A673 (cell line): ENCODE measurements at regions of chr6 and their contacts with region 1.

Region 1: GRCh38 chr6:88982720-88983119 is 19.3 kb upstream of the RNGTT start:
- DNase-seq: peak; percentile 70
- H3K4me3 ChIP-seq: no peak overlapping the region
- H3K27ac ChIP-seq: no peak overlapping the region
- H3K4me1 ChIP-seq: peaks cover 3% of the 10 kb centered on the region
- H3K27me3 ChIP-seq: no peaks in the 10 kb centered on the region
- CTCF ChIP-seq: peak; percentile 77

Region 2: GRCh38 chr6:88899569-88900316 is 83.0 kb before region 1 on chr6:
- CTCF ChIA-PET with region 1: no interaction called
- POLR2A ChIA-PET with region 1: no interaction called
- intact Hi-C with region 1: no loop called
- DNase-seq: peak; percentile 20
- H3K4me3 ChIP-seq: no peak overlapping the region
- H3K27ac ChIP-seq: no peak overlapping the region
- H3K4me1 ChIP-seq: no peaks in the 10 kb centered on the region
- H3K27me3 ChIP-seq: no peaks in the 10 kb centered on the region
- CTCF ChIP-seq: peak; percentile 48; the same call in 1 of the 2 replicates

Region 3: DNA sequence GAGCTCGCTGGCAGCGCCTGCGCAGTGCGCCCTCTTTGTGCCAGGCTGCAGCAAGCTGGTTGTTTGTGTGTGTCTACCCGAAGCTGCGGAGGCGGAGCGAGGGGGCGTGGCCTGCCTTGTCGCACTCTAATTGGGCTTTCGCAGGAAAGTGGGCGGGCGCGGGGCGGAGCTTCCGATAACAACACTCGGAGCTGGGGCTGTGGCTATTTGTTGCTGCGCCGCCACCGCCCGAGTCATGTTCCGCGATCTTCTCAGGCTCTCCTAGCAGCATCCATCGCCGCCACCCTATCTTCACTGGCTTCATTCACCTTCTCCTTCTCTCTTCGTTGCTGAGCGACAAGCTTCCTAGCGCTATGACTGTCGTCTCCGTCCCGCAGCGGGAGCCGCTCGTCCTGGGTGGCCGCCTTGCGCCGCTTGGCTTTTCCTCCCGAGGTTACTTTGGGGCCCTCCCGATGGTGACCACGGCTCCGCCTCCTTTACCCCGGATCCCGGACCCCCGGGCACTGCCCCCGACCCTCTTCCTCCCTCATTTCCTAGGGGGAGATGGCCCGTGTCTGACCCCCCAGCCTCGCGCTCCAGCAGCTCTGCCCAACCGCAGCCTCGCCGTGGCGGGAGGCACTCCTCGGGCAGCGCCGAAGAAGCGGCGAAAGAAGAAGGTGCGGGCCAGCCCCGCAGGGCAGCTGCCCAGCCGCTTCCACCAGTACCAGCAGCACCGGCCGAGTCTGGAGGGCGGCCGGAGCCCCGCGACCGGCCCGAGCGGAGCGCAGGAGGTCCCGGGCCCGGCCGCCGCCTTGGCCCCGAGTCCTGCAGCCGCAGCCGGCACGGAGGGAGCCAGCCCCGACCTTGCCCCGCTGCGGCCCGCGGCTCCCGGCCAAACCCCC is 98.1 kb after region 1 on chr6 and contains the start of gene PNRC1:
- CTCF ChIA-PET with region 1: interaction called, 11 read pairs
- POLR2A ChIA-PET with region 1: interaction called, 4 read pairs
- intact Hi-C with region 1: loop called (anchors 2 kb)
- DNase-seq: peak; percentile 99
- H3K4me3 ChIP-seq: peak within 1 kb of the TSS; percentile 96
- H3K27ac ChIP-seq: peak within 1 kb of the TSS; percentile 95
- H3K4me1 ChIP-seq: peaks cover 12% of the 10 kb centered on the region
- H3K27me3 ChIP-seq: no peaks in the 10 kb centered on the region
- CTCF ChIP-seq: no peak
- total RNA-seq, gene PNRC1: 26.4 and 36.1 TPM in 2 replicates

Region 4: GRCh38 chr6:89122625-89123024 is 139.9 kb after region 1 on chr6:
- CTCF ChIA-PET with region 1: interaction called, 7 read pairs
- POLR2A ChIA-PET with region 1: no interaction called
- intact Hi-C with region 1: loop called (anchors 1 kb)
- DNase-seq: peak; percentile 74
- H3K4me3 ChIP-seq: no peak overlapping the region
- H3K27ac ChIP-seq: no peak overlapping the region
- H3K4me1 ChIP-seq: peaks cover 5% of the 10 kb centered on the region
- H3K27me3 ChIP-seq: no peaks in the 10 kb centered on the region
- CTCF ChIP-seq: peak; percentile 72

Region 5: GRCh38 chr6:89242574-89243330 is 260.0 kb after region 1 on chr6:
- CTCF ChIA-PET with region 1: interaction called, 7 read pairs
- POLR2A ChIA-PET with region 1: no interaction called
- intact Hi-C with region 1: loop called (anchors 1 kb)
- DNase-seq: peak; percentile 91
- H3K4me3 ChIP-seq: no peak overlapping the region
- H3K27ac ChIP-seq: peak overlapping the region; percentile 63
- H3K4me1 ChIP-seq: peaks cover 37% of the 10 kb centered on the region
- H3K27me3 ChIP-seq: no peaks in the 10 kb centered on the region
- CTCF ChIP-seq: peak; percentile 68

Region 6: GRCh38 chr6:89371849-89372505 is 389.3 kb after region 1 on chr6:
- CTCF ChIA-PET with region 1: interaction called, 14 read pairs
- POLR2A ChIA-PET with region 1: no interaction called
- intact Hi-C with region 1: loop called (anchors 1 kb)
- DNase-seq: peak; percentile 75
- H3K4me3 ChIP-seq: no peak overlapping the region
- H3K27ac ChIP-seq: no peak overlapping the region
- H3K4me1 ChIP-seq: peaks cover 10% of the 10 kb centered on the region
- H3K27me3 ChIP-seq: no peaks in the 10 kb centered on the region
- CTCF ChIP-seq: peak; percentile 99

Region 7: DNA sequence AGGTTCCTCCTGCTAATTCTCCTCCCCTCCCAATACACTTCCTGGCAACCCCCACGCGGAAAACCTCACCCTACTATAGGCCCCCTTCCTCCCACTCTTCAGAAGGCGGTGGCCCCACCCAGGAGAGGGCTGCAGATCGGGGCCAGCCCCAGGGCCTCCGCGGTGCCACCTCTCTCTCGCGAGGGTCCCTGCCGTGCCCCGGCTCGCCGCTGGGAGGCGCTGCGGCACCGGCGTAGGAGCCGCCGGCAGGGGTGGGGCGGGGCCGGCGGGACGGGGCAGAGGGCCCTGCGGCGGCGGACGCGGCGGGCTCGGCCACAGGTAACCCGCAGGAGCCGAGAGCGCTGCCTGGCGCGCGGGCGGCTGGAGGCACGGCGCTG is 450.1 kb after region 1 on chr6 and contains the start of gene ANKRD6:
- CTCF ChIA-PET with region 1: no interaction called
- POLR2A ChIA-PET with region 1: no interaction called
- intact Hi-C with region 1: loop called (anchors 5 kb)
- DNase-seq: peak; percentile 83
- H3K4me3 ChIP-seq: peak within 1 kb of the TSS; percentile 83
- H3K27ac ChIP-seq: peak within 1 kb of the TSS; percentile 81
- H3K4me1 ChIP-seq: peaks cover 55% of the 10 kb centered on the region
- H3K27me3 ChIP-seq: no peaks in the 10 kb centered on the region
- CTCF ChIP-seq: peak; percentile 70
- total RNA-seq, gene ANKRD6: 25.4 and 36.4 TPM in 2 replicates

Region 8: DNA sequence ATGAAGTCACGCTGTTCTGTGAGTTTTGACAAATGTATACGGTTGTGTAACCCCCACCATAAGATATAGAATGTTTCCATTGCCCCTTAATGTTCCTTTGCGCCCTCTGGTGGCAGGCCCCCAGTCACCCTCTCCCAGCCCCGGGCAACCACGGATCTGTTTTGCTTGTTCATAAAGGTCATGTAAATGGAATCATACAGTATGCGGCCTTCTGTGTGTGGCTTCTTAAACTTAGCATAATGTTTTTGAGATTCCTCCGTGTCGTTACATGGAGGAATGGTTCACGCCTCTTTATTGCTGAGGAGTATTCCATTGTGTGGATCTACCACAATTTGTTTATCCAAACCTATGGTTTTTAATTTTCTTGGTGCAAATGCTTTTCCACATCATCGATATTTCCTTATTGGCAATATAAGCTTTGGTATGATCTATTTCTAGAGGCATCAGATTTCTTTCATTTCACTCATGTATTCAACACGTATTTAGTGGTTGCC is 627.5 kb after region 1 on chr6:
- CTCF ChIA-PET with region 1: interaction called, 3 read pairs
- POLR2A ChIA-PET with region 1: no interaction called
- intact Hi-C with region 1: loop called (anchors 2 kb)
- DNase-seq: peak; percentile 69
- H3K4me3 ChIP-seq: no peak overlapping the region
- H3K27ac ChIP-seq: no peak overlapping the region
- H3K4me1 ChIP-seq: no peaks in the 10 kb centered on the region
- H3K27me3 ChIP-seq: no peaks in the 10 kb centered on the region
- CTCF ChIP-seq: peak; percentile 93